CD4-positive, alpha-beta T cell (primary cell): ENCODE measurements at regions of chr1 and their contacts with region 1.

Region 1: DNA sequence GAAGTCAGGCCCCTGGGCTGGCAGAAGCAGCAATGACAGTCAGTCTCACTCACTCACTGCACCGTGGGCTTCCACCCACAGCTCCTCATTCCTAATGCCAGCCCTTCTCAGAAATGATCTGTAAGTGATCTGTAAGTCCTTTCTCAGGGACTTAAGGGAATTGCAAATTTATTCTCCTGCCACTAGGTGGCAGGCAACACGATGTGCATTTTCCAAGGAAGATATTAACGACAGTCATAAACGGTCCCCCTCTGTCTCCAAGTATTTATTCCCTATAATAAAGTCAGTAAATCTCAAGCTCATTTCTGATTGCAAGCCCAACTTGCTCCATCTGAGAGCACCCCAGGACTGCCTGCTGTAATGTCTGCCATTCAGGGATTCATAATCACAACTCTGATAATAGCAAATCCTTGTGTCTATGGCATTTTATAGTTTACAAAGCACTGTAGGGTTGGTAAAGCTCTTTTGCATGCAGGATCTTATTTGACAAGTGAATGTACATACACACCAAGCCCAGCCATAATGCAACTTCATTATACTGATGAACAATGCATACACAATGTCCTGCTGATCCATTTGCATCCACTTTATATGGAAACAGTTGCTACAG is 380.6 kb upstream of the CAMK1G start:
- DNase-seq: peak in 4 of 14 experiments; percentile 5 to 39 (median 26)
- ATAC-seq: no peak
- H3K4me3 ChIP-seq: no peak overlapping the region
- H3K4me3 Mint-ChIP-seq: no peak overlapping the region
- H3K27ac ChIP-seq: no peak overlapping the region
- H3K27ac Mint-ChIP-seq: no peak overlapping the region
- H3K4me1 ChIP-seq: peaks cover 5% of the 10 kb centered on the region
- H3K4me1 Mint-ChIP-seq: no peaks in the 10 kb centered on the region
- H3K27me3 ChIP-seq: peaks cover 12 to 20% of the 10 kb centered on the region in 2 experiments
- H3K27me3 Mint-ChIP-seq: peaks cover 63% of the 10 kb centered on the region
- CTCF ChIP-seq: peak; percentile 63

Region 2: GRCh38 chr1:209565759-209566678 is 363.1 kb after region 1 on chr1:
- CTCF ChIA-PET with region 1: no interaction called
- POLR2A ChIA-PET with region 1: no interaction called
- intact Hi-C with region 1: loop called in 1 of 2 experiments (anchors 2 kb)
- DNase-seq: peak; percentile 49 to 84 (median 62)
- ATAC-seq: peak; percentile 89
- H3K4me3 ChIP-seq: no peak overlapping the region
- H3K4me3 Mint-ChIP-seq: no peak overlapping the region
- H3K27ac ChIP-seq: no peak overlapping the region
- H3K27ac Mint-ChIP-seq: no peak overlapping the region
- H3K4me1 ChIP-seq: peaks cover 8% of the 10 kb centered on the region
- H3K4me1 Mint-ChIP-seq: peaks cover 12% of the 10 kb centered on the region
- H3K27me3 ChIP-seq: no peaks in the 10 kb centered on the region
- H3K27me3 Mint-ChIP-seq: peaks cover 67% of the 10 kb centered on the region
- CTCF ChIP-seq: peak; percentile 74